Activated T-helper 1 cell treated with anti-CD3 and anti-CD28 coated beads, Interleukin-12 subunit alpha, Interleukin-12 subunit beta, Interleukin-2, Interleukin-4 antibody, amounts not matched to agents 30 ng/mL and 10 ng/mL and 1 ng/mL, durations not matched to agents 14 hours and 24 hours and 36 hours (primary cell): ENCODE measurements at regions of chr21 and their contacts with region 1.

Region 1: GRCh38 chr21:27570306-27570868 is 603.5 kb upstream of the ADAMTS5 start:
- DNase-seq: no peak
- H3K4me3 Mint-ChIP-seq: no peak overlapping the region
- H3K27ac Mint-ChIP-seq: no peak overlapping the region
- H3K4me1 Mint-ChIP-seq: no peaks in the 10 kb centered on the region
- H3K27me3 Mint-ChIP-seq: no peaks in the 10 kb centered on the region

Region 2: DNA sequence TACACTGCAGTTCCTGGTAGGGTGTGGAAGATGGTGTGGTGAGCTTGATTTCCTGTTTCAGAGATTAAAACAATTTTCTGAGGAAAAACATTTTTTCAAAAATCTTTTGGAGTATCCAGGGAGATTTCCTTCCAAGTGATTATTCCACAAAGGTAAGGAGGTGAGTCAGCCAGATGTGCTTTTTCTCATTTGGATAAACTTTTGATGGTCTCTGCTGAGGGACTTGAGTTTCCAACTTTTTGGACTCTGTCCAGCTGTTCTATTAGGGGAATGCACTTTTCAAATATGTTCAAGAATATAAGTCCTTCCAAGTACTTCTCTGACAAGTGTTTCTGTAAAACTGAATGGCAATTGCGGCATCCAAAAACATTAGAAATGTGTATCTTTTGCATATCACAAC is 25.3 kb after region 1 on chr21:
- intact Hi-C with region 1: loop called (anchors 1 kb)
- DNase-seq: no peak
- H3K4me3 Mint-ChIP-seq: no peak overlapping the region
- H3K27ac Mint-ChIP-seq: no peak overlapping the region
- H3K4me1 Mint-ChIP-seq: no peaks in the 10 kb centered on the region
- H3K27me3 Mint-ChIP-seq: no peaks in the 10 kb centered on the region

Region 3: DNA sequence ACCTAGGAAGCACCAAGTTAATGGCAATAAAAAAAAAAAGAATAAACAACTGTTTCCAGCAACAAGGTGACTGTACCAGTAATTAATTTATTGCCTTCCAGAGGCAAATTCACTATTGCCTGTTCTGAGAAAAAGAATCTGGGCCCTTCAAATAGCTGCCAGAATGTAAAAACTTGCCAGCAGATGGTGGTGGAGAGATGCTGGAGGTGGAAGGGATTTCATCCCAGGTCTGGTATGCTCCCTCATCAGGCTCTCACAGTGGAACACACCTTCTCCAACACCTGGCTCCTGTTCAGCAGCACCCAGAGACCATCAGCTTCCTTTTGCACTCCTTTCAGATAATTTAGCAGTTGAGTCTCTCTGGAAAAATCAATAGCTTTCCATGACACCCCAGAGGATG is 189.4 kb after region 1 on chr21:
- intact Hi-C with region 1: no loop called
- DNase-seq: no peak
- H3K4me3 Mint-ChIP-seq: no peak overlapping the region
- H3K27ac Mint-ChIP-seq: no peak overlapping the region
- H3K4me1 Mint-ChIP-seq: no peaks in the 10 kb centered on the region
- H3K27me3 Mint-ChIP-seq: no peaks in the 10 kb centered on the region